ENCODE measurements at regions of chr3 and their contacts with region 1.

Region 1: GRCh38 chr3:12484198-12484974 is at the start of gene TSEN2:
- DNase-seq: peak; percentile 93 to 99 (median 96)
- ATAC-seq: peak; percentile 95
- H3K4me3 ChIP-seq: peak within 1 kb of the TSS; percentile 64 to 72
- H3K4me3 Mint-ChIP-seq: peak within 1 kb of the TSS; percentile 93
- H3K27ac ChIP-seq: peak within 1 kb of the TSS; percentile 76 to 83
- H3K27ac Mint-ChIP-seq: peak within 1 kb of the TSS; percentile 98
- H3K4me1 ChIP-seq: peaks cover 17% of the 10 kb centered on the region
- H3K4me1 Mint-ChIP-seq: peaks cover 37% of the 10 kb centered on the region
- H3K27me3 ChIP-seq: no peaks in the 10 kb centered on the region
- H3K27me3 Mint-ChIP-seq: no peaks in the 10 kb centered on the region
- CTCF ChIP-seq: no peak
- total RNA-seq, gene TSEN2: 5.1 to 6.1 TPM

Region 2: DNA sequence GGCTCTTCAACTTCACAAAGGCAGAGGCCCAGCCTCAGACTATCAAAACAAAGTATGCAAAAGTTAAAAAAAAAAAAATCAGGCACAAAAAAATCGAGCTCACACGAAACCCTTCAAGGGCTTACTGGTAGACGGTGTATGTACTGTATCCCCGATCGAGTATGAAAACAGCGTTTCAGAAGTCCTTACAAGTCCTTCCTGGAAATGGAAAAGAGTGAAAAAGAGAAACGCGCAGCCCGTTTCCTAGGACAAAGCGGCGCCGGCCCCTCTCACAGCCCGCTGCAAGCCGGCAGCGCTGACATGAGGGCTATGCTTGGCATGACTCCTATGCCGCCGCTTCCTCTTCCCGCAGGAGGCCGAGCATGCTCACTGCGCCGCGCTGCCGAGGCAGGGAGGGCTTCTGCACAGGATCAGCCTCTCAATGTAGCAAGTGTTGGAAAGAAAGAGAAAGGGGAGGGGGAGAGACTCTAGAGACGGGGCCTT is 840.7 kb before region 1 on chr3 and contains the start of gene VGLL4:
- CTCF ChIA-PET with region 1: no interaction called
- POLR2A ChIA-PET with region 1: no interaction called
- intact Hi-C with region 1: loop called in 1 of 2 experiments (anchors 5 kb)
- DNase-seq: peak in 8 of 9 experiments; percentile 55 to 79 (median 66)
- ATAC-seq: peak; percentile 52
- H3K4me3 ChIP-seq: peak within 1 kb of the TSS; percentile 82 to 91
- H3K4me3 Mint-ChIP-seq: peak within 1 kb of the TSS; percentile 99
- H3K27ac ChIP-seq: peak within 1 kb of the TSS; percentile 85 to 95
- H3K27ac Mint-ChIP-seq: peak within 1 kb of the TSS; percentile 99
- H3K4me1 ChIP-seq: peaks cover 19% of the 10 kb centered on the region
- H3K4me1 Mint-ChIP-seq: peaks cover 33% of the 10 kb centered on the region
- H3K27me3 ChIP-seq: no peaks in the 10 kb centered on the region
- H3K27me3 Mint-ChIP-seq: no peaks in the 10 kb centered on the region
- CTCF ChIP-seq: no peak
- total RNA-seq, gene VGLL4: 13.8 to 14.1 TPM

Region 3: DNA sequence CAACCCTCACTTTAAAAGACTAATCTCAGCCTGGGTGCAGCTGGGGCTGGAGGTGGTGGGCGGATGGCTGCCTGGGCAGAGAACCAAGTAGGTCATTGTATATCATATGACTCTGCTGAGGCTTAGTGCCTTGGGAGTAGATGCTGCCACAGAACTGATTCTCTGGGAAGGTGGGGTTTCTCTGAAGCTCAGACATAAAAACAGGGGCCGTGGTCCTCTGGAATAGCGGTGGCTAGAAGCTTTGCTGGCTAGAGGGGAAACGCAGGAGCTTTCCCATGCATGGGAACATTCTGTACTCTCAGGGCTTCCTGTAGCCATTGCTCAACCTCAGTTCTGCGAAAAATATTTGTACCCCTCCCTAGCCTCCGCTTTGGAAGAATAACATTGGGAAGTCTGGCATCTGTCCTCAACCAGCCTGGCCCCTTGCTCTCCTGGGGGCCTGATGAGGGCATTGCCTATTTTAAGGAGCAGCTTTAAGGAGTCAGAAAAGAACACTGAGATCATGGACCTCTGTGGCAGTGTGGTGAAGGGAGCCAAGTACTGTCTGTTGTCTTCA is 340.4 kb before region 1 on chr3:
- CTCF ChIA-PET with region 1: interaction called, 15 read pairs
- POLR2A ChIA-PET with region 1: no interaction called
- intact Hi-C with region 1: no loop called
- DNase-seq: no peak
- ATAC-seq: no peak
- H3K4me3 ChIP-seq: no peak overlapping the region
- H3K4me3 Mint-ChIP-seq: no peak overlapping the region
- H3K27ac ChIP-seq: no peak overlapping the region
- H3K27ac Mint-ChIP-seq: no peak overlapping the region
- H3K4me1 ChIP-seq: no peaks in the 10 kb centered on the region
- H3K4me1 Mint-ChIP-seq: no peaks in the 10 kb centered on the region
- H3K27me3 ChIP-seq: no peaks in the 10 kb centered on the region
- H3K27me3 Mint-ChIP-seq: peaks cover 2% of the 10 kb centered on the region
- CTCF ChIP-seq: no peak

Region 4: GRCh38 chr3:12556671-12557472 is 72.5 kb after region 1 on chr3 and contains the start of gene MKRN2:
- CTCF ChIA-PET with region 1: interaction called, 5 read pairs
- POLR2A ChIA-PET with region 1: interaction called, 4 read pairs
- intact Hi-C with region 1: loop called (anchors 1 kb)
- DNase-seq: peak; percentile 67 to 94 (median 83)
- ATAC-seq: peak; percentile 93
- H3K4me3 ChIP-seq: peak within 1 kb of the TSS; percentile 73 to 86
- H3K4me3 Mint-ChIP-seq: peak within 1 kb of the TSS; percentile 89
- H3K27ac ChIP-seq: peak within 1 kb of the TSS; percentile 86 to 92
- H3K27ac Mint-ChIP-seq: peak within 1 kb of the TSS; percentile 90
- H3K4me1 ChIP-seq: peaks cover 49% of the 10 kb centered on the region
- H3K4me1 Mint-ChIP-seq: peaks cover 60% of the 10 kb centered on the region
- H3K27me3 ChIP-seq: peaks cover 6 to 16% of the 10 kb centered on the region in 2 experiments
- H3K27me3 Mint-ChIP-seq: peaks cover 24% of the 10 kb centered on the region
- CTCF ChIP-seq: no peak
- total RNA-seq, gene MKRN2: 24.8 to 25.5 TPM

Region 5: DNA sequence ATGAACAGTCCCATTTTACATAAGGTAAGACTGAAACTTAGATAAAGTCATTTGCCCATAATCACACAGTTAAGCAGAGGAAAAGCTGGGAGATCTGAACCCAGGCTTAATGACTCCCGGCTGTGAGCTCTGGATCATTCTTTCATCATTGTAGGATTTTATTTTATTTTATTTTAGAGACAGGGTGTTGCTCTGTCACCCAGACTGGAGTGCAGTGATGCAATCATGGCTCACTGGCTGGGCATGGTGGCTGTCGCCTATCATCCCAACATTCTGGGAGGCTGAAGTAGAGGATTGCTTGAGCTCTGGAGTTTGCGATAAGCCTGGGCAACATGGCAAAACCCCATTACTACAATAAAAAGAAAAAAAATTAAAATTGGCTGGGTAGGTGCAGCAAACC is 210.7 kb after region 1 on chr3:
- CTCF ChIA-PET with region 1: no interaction called
- POLR2A ChIA-PET with region 1: no interaction called
- intact Hi-C with region 1: no loop called
- DNase-seq: no peak
- ATAC-seq: no peak
- H3K4me3 ChIP-seq: no peak overlapping the region
- H3K4me3 Mint-ChIP-seq: no peak overlapping the region
- H3K27ac ChIP-seq: no peak overlapping the region
- H3K27ac Mint-ChIP-seq: no peak overlapping the region
- H3K4me1 ChIP-seq: no peaks in the 10 kb centered on the region
- H3K4me1 Mint-ChIP-seq: no peaks in the 10 kb centered on the region
- H3K27me3 ChIP-seq: no peaks in the 10 kb centered on the region
- H3K27me3 Mint-ChIP-seq: no peaks in the 10 kb centered on the region
- CTCF ChIP-seq: no peak

Region 6: GRCh38 chr3:12841149-12841970 is 357.0 kb after region 1 on chr3 and contains the start of gene RPL32:
- CTCF ChIA-PET with region 1: no interaction called
- POLR2A ChIA-PET with region 1: no interaction called
- intact Hi-C with region 1: loop called (anchors 1 to 5 kb)
- DNase-seq: peak; percentile 72 to 97 (median 84)
- ATAC-seq: peak; percentile 91
- H3K4me3 ChIP-seq: peak within 1 kb of the TSS; percentile 86 to 98
- H3K4me3 Mint-ChIP-seq: peak within 1 kb of the TSS; percentile 98
- H3K27ac ChIP-seq: peak within 1 kb of the TSS; percentile 93 to 95
- H3K27ac Mint-ChIP-seq: peak within 1 kb of the TSS; percentile 99
- H3K4me1 ChIP-seq: peaks cover 29% of the 10 kb centered on the region
- H3K4me1 Mint-ChIP-seq: peaks cover 48% of the 10 kb centered on the region
- H3K27me3 ChIP-seq: no peaks in the 10 kb centered on the region
- H3K27me3 Mint-ChIP-seq: no peaks in the 10 kb centered on the region
- CTCF ChIP-seq: peak; percentile 68
- total RNA-seq, gene RPL32: 4,188 to 4,224 TPM